ENCODE measurements at regions of chr20 and their contacts with region 1.

Region 1: DNA sequence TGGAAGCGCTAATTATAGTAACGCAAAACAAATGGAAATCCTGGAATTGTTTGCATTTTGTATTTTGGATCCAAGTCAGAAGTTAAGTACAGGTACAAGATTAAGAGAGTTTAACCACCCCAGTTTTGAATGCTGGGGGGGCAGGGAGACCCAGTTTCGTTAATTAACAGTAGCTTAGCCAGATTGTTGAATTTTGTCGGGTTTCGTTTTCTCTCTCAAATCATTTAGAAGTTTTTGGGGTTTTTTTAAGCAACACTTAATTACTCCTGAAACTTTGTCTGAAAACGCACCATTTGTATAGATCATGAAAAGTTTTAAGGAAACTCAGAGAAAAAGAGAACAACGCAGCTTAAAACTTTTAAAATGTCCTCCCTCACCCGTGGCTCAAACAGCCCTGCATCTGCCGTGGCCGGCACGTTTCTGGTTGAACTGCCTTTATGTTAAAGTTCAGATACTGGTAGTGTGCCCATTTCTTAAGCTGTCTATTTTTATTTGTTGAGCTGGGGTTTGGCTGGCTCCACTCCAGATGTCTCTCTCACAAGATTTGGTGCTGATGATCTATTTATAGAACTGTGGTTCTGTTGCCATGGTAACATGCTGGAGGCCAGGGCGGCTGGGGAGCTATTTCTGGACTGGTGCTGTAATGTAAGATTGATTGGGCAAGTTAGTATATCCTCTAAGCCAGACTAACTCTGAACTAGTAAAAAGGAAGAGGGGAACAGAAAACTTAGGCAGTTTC is 55.1 kb downstream of the GNAS start:
- DNase-seq: peak; percentile 95
- H3K4me3 Mint-ChIP-seq: peak overlapping the region; percentile 12
- H3K27ac Mint-ChIP-seq: peak overlapping the region; percentile 50
- H3K4me1 Mint-ChIP-seq: peaks cover 17% of the 10 kb centered on the region
- H3K27me3 Mint-ChIP-seq: no peaks in the 10 kb centered on the region
- CTCF ChIP-seq: no peak

Region 2: GRCh38 chr20:58888521-58889333 is 18.8 kb before region 1 on chr20:
- CTCF ChIA-PET with region 1: interaction called, 4 read pairs
- POLR2A ChIA-PET with region 1: interaction called, 10 read pairs
- intact Hi-C with region 1: no loop called
- DNase-seq: peak; percentile 73
- H3K4me3 Mint-ChIP-seq: peak overlapping the region; percentile 92
- H3K27ac Mint-ChIP-seq: no peak overlapping the region
- H3K4me1 Mint-ChIP-seq: peaks cover 5% of the 10 kb centered on the region
- H3K27me3 Mint-ChIP-seq: no peaks in the 10 kb centered on the region
- CTCF ChIP-seq: no peak

Region 3: GRCh38 chr20:58921564-58921963 is 14.0 kb after region 1 on chr20:
- CTCF ChIA-PET with region 1: interaction called, 3 read pairs
- POLR2A ChIA-PET with region 1: interaction called, 14 read pairs
- intact Hi-C with region 1: no loop called
- DNase-seq: no peak
- H3K4me3 Mint-ChIP-seq: no peak overlapping the region
- H3K27ac Mint-ChIP-seq: no peak overlapping the region
- H3K4me1 Mint-ChIP-seq: no peaks in the 10 kb centered on the region
- H3K27me3 Mint-ChIP-seq: no peaks in the 10 kb centered on the region
- CTCF ChIP-seq: no peak

Region 4: DNA sequence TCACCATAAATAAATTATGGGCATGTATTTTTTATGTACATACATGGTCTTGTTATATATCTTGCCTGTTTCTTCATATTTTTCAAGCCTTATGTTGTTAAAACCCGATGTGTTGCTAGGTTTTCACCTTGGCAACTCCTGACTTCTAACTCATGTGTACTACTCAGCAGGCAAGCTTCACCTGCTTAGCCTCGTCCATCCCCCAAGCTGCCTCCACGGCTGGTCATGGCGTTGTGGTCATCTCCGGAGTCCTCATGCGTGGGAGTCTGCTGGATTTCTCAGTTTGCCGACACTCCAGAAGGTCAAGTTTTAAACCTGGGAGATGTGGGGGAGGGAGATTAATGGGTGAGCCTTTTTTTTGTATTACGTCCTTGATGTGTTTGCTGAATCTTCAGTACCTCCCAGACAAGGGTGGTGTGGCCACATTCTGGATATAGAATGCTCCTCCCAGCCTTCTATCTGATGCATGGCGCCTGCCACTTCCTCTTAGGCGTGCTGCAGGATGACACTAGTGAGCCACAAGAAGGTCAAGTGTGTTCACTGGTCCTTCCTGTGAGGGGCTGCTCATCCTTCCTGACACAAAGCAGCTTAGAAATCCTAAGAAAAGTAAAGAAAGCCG is 366.3 kb after region 1 on chr20:
- CTCF ChIA-PET with region 1: no interaction called
- POLR2A ChIA-PET with region 1: no interaction called
- intact Hi-C with region 1: no loop called
- DNase-seq: no peak
- H3K4me3 Mint-ChIP-seq: no peak overlapping the region
- H3K27ac Mint-ChIP-seq: no peak overlapping the region
- H3K4me1 Mint-ChIP-seq: no peaks in the 10 kb centered on the region
- H3K27me3 Mint-ChIP-seq: peaks cover 89% of the 10 kb centered on the region
- CTCF ChIP-seq: no peak